ENCODE measurements at regions of chr7 and their contacts with region 1.

Region 1: GRCh38 chr7:21427182-21427870 is 557 bp upstream of the SP4 start:
- DNase-seq: peak; percentile 99
- ATAC-seq: peak; percentile 75
- H3K4me3 Mint-ChIP-seq: peak overlapping the region; percentile 100
- H3K27ac Mint-ChIP-seq: peak overlapping the region; percentile 100
- H3K4me1 Mint-ChIP-seq: peaks cover 49% of the 10 kb centered on the region
- H3K27me3 Mint-ChIP-seq: no peaks in the 10 kb centered on the region
- CTCF ChIP-seq: no peak

Region 2: GRCh38 chr7:19708397-19709248 is 1718.7 kb before region 1 on chr7 and contains the start of gene POLR1F:
- CTCF ChIA-PET with region 1: no interaction called
- POLR2A ChIA-PET with region 1: no interaction called
- intact Hi-C with region 1: loop called (anchors 2 kb)
- DNase-seq: peak; percentile 83
- ATAC-seq: peak; percentile 98
- H3K4me3 Mint-ChIP-seq: peak within 1 kb of the TSS; percentile 97
- H3K27ac Mint-ChIP-seq: peak within 1 kb of the TSS; percentile 88
- H3K4me1 Mint-ChIP-seq: peaks cover 43% of the 10 kb centered on the region
- H3K27me3 Mint-ChIP-seq: peaks cover 4% of the 10 kb centered on the region
- CTCF ChIP-seq: no peak
- total RNA-seq, gene POLR1F: 19.9 and 20.0 TPM in 2 replicates

Region 3: DNA sequence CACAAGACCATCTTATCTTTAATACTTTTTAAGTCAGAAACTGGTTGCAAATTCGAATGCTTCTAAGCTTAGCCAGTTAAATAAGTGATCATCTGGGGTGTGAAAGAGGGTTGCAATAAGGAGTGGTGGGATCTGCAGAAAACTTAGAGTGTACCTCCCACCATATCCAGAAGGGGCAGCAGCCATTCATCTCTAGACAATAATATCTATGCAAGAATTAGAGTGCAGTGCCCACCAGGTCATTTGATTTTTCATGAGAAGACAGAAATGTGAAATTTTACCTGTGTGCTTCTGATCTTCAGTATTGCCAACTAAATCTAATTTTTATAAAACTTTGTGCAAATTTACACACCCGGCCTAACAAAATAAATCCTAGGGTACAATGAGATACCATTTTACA is 126.6 kb before region 1 on chr7:
- CTCF ChIA-PET with region 1: no interaction called
- POLR2A ChIA-PET with region 1: no interaction called
- intact Hi-C with region 1: loop called (anchors 2 kb)
- DNase-seq: no peak
- ATAC-seq: no peak
- H3K4me3 Mint-ChIP-seq: no peak overlapping the region
- H3K27ac Mint-ChIP-seq: no peak overlapping the region
- H3K4me1 Mint-ChIP-seq: peaks cover 6% of the 10 kb centered on the region
- H3K27me3 Mint-ChIP-seq: no peaks in the 10 kb centered on the region
- CTCF ChIP-seq: no peak

Region 4: DNA sequence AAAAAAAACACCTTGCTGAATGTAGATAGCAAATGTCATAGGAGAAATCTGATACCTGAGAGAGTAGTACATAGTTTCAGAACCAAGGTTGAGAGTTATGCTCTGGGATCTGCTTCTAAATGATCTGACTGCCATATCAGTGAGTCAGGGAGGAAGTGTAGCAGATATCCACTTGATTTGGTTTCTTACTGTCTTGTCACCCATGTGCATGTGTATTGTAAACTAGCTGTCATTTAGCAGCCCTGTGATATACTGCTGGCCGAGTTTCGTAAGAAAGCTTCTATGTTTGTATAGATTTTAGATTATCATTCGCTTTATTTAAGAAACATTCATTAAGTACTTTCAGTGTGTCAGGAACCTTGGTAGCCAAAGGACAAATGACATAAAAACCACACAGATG is 42.6 kb after region 1 on chr7:
- CTCF ChIA-PET with region 1: no interaction called
- POLR2A ChIA-PET with region 1: no interaction called
- intact Hi-C with region 1: loop called (anchors 5 kb)
- DNase-seq: no peak
- ATAC-seq: no peak
- H3K4me3 Mint-ChIP-seq: no peak overlapping the region
- H3K27ac Mint-ChIP-seq: no peak overlapping the region
- H3K4me1 Mint-ChIP-seq: peaks cover 33% of the 10 kb centered on the region
- H3K27me3 Mint-ChIP-seq: no peaks in the 10 kb centered on the region
- CTCF ChIP-seq: no peak

Region 5: GRCh38 chr7:21538938-21539495 is 111.7 kb after region 1 on chr7:
- CTCF ChIA-PET with region 1: no interaction called
- POLR2A ChIA-PET with region 1: no interaction called
- intact Hi-C with region 1: no loop called
- DNase-seq: no peak
- ATAC-seq: no peak
- H3K4me3 Mint-ChIP-seq: no peak overlapping the region
- H3K27ac Mint-ChIP-seq: no peak overlapping the region
- H3K4me1 Mint-ChIP-seq: peaks cover 11% of the 10 kb centered on the region
- H3K27me3 Mint-ChIP-seq: peaks cover 45% of the 10 kb centered on the region
- CTCF ChIP-seq: no peak

Region 6: GRCh38 chr7:21844742-21845141 is 417.4 kb after region 1 on chr7:
- CTCF ChIA-PET with region 1: no interaction called
- POLR2A ChIA-PET with region 1: no interaction called
- intact Hi-C with region 1: no loop called
- DNase-seq: no peak
- ATAC-seq: no peak
- H3K4me3 Mint-ChIP-seq: no peak overlapping the region
- H3K27ac Mint-ChIP-seq: no peak overlapping the region
- H3K4me1 Mint-ChIP-seq: no peaks in the 10 kb centered on the region
- H3K27me3 Mint-ChIP-seq: no peaks in the 10 kb centered on the region
- CTCF ChIP-seq: no peak

Region 7: DNA sequence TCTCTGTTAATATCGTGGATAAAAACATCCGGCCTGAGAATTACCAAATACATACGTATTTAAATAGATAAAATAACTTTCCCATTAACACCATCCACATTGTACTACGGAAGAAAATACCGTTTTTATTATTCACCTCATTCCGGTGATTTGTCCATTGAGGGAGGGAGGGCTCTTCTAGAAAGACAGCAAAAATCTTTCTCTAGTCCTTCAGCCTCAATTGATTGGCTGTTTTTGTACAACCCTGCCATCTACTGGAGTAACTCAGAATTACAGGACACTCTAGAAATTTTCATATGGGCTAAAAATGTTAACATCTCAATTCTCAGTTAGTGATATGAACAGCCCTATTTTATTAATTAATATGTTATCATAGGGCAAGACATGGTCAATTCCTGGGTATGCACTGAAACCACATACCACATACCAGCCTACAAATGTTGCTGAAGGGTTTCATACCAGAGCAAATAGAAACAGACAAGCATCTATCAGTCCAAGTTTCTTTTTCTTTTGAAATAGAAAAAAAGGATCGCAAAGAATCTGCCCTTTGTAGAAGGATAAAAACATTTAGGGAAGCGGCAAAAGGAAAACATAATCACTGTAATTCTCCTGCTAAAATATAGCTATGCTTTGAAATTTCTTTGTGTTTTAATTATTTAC is 574.1 kb after region 1 on chr7:
- CTCF ChIA-PET with region 1: no interaction called
- POLR2A ChIA-PET with region 1: no interaction called
- intact Hi-C with region 1: loop called (anchors 5 kb)
- DNase-seq: no peak
- ATAC-seq: peak; percentile 84
- H3K4me3 Mint-ChIP-seq: peak overlapping the region; percentile 39
- H3K27ac Mint-ChIP-seq: no peak overlapping the region
- H3K4me1 Mint-ChIP-seq: peaks cover 6% of the 10 kb centered on the region
- H3K27me3 Mint-ChIP-seq: peaks cover 3% of the 10 kb centered on the region
- CTCF ChIP-seq: peak; percentile 39

Region 8: GRCh38 chr7:23013715-23014649 is 1586.7 kb after region 1 on chr7 and contains the start of gene HYCC1:
- CTCF ChIA-PET with region 1: no interaction called
- POLR2A ChIA-PET with region 1: no interaction called
- intact Hi-C with region 1: loop called (anchors 1 kb)
- DNase-seq: peak; percentile 95
- ATAC-seq: peak; percentile 96
- H3K4me3 Mint-ChIP-seq: peak within 1 kb of the TSS; percentile 99
- H3K27ac Mint-ChIP-seq: peak within 1 kb of the TSS; percentile 93
- H3K4me1 Mint-ChIP-seq: peaks cover 44% of the 10 kb centered on the region
- H3K27me3 Mint-ChIP-seq: no peaks in the 10 kb centered on the region
- CTCF ChIP-seq: no peak
- total RNA-seq, gene HYCC1: 39.9 and 41.9 TPM in 2 replicates

Region 9: GRCh38 chr7:23410446-23411183 is 1983.3 kb after region 1 on chr7:
- CTCF ChIA-PET with region 1: no interaction called
- POLR2A ChIA-PET with region 1: no interaction called
- intact Hi-C with region 1: loop called (anchors 5 kb)
- DNase-seq: no peak
- ATAC-seq: peak; percentile 93
- H3K4me3 Mint-ChIP-seq: peak overlapping the region; percentile 2
- H3K27ac Mint-ChIP-seq: peak overlapping the region; percentile 79
- H3K4me1 Mint-ChIP-seq: peaks cover 28% of the 10 kb centered on the region
- H3K27me3 Mint-ChIP-seq: no peaks in the 10 kb centered on the region
- CTCF ChIP-seq: no peak